Mucosa of descending colon (tissue), 3 donors: ENCODE measurements at regions of chr7 and their contacts with region 1.

Region 1: GRCh38 chr7:44973610-44974401 is 5.0 kb downstream of the MYO1G start:
- DNase-seq: peak in 2 of 3 donors; percentile 79 to 81
- ATAC-seq: peak; percentile 60
- H3K4me3 ChIP-seq: no peak overlapping the region
- H3K4me1 ChIP-seq: no peaks in the 10 kb centered on the region
- CTCF ChIP-seq: peak; percentile 32

Region 2: DNA sequence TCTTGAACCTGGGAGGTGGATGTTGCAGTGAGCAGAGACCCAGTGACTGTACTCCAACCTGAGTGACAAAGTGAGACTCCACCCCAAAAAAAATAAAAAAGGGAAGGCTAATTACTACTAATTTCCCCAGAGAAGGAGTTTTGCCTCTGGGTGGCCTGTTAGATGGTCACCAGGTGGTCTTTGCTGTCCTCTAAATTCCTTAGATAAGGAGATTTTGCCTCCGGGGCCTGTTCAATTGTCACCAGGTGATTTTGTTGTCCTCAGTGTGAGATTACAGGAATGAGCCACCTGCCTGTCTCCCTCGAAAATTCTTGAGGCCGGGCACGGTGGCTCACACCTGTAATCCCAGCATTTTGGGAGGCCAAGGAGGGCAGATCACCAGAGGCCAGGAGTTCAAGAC is 249.5 kb before region 1 on chr7:
- intact Hi-C with region 1: no loop called
- DNase-seq: no peak
- ATAC-seq: no peak
- H3K4me3 ChIP-seq: no peak overlapping the region
- H3K4me1 ChIP-seq: no peaks in the 10 kb centered on the region
- CTCF ChIP-seq: no peak

Region 3: DNA sequence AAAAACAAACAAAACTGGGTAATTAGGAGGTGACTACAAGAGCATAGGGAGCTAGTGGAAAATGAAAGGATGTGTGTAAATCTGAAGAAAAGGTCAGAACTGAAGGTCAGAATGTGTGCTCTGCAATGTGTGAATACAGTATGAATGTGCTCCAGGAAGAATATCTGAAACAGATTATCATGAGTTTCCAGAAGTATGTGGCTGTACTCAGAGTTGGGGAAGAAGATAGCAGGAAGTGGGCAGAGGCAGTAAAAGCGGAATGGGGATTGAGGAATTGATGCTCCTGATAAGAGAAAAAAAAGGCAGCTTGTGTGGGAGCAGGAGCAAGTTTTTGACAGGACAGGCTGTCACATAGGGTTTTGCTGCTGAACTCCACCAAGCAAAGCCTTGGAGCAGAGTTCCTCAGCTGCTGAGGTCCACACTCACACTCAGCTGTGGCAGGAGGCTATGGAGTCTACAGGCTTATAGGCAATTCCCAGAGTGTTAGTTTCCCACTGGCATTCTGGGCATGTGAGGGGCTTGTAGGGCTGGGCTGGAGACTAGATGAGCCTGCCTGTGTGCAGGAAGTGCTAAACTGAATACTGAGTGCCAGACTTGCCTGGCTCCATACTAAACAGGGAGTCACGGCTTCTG is 148.8 kb before region 1 on chr7:
- intact Hi-C with region 1: no loop called
- DNase-seq: no peak
- ATAC-seq: peak; percentile 25
- H3K4me3 ChIP-seq: no peak overlapping the region
- H3K4me1 ChIP-seq: no peaks in the 10 kb centered on the region
- CTCF ChIP-seq: no peak

Region 4: DNA sequence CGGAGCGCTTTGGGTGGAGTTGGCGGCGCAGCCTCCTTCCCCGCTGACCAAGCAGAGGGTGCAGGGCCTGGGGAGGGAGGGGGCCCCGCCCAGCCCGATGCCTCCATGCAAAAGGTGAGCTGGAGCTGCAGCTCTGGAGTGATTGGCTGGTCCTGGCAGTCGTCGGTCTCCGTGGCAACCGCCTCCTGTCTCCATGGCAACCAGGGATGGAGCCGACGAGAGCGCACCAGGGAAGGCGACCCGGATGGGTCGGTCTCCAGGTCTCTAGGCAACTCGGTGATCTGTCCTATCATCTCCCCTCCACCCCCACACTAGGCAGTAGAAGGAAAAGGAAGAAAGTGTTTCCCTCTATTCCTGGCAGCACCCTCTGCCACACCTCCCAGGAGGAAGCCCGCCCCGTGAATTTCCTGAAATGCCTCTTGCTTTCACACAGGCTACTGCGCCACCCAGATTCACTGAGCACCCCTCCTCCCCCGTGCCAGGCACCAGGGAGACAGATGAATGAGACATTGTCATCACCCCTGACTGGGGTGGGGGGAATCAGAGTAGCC is 115.6 kb after region 1 on chr7:
- intact Hi-C with region 1: no loop called
- DNase-seq: peak; percentile 62 to 64 (median 63)
- ATAC-seq: peak; percentile 42
- H3K4me3 ChIP-seq: no peak overlapping the region
- H3K4me1 ChIP-seq: no peaks in the 10 kb centered on the region
- CTCF ChIP-seq: no peak

Region 5: DNA sequence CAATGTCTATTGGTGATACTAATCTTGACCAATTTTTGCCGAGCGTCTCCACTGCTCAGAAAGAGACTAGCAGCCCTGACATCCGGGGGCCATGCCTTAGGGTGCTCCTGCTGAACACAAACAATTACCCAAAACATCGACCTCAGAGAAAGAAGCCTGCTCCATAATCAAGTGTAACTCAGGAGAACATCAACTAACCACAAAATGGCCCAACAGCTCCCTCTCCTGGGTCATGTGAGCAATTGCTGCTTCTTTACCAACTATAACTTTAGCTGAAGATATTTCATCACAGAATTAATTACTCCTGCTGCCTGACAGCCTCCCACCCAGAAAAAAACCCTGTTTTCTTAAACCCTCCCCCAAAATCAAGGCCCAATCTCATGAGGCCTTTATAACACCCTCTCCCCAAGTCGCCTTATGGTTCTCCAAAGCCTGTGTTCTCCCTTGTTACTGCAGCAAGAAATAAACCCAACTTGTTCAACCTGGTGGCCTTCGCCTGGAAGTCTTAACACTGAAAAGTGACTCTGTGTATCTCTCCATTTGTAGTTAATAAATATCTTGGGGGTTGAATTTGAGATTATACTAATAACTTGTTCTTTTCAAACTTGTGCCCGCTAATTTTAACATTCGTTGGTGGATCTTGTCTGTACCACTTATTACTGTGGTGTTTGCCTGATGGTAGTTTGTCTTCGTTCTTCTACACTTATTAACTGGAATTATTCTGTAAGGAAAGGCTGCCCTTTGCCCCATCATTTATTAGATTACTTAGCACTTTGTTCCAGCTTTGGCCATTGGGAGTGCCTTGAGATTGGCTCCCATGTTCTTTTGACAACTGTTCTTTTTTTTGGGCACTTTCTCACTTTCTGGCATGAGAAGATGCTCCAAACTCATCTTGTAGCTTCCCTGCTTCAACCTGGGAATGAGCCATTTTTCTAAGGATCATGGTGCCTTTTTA is 162.6 kb after region 1 on chr7:
- intact Hi-C with region 1: loop called in 1 of 2 experiments (anchors 2 kb)
- DNase-seq: peak in 1 of 3 donors; percentile 37
- ATAC-seq: peak; percentile 81
- H3K4me3 ChIP-seq: no peak overlapping the region
- H3K4me1 ChIP-seq: peaks cover 3% of the 10 kb centered on the region
- CTCF ChIP-seq: peak; percentile 71